ENCODE measurements at regions of chr2 and their contacts with region 1.

Region 1: DNA sequence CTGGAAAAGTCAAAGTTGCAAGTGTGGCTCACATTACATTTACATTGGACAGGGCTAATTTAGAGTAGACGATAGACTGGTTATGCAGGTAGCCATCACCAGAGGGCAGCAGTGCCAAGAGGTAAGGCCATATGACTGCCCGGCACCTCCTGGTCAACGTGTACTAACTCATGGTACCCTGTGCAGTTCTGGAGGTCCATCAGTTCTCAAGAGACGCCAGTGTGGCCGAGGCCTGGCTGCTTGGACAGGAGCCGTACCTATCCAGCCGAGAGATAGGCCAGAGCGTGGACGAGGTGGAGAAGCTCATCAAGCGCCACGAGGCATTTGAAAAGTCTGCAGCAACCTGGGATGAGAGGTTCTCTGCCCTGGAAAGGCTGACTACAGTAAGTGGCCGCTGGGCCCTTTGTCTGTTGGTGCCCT is 65.8 kb upstream of the EML6 start:
- DNase-seq: peak; percentile 61 to 72
- ATAC-seq: peak; percentile 82 to 92 (median 88)
- H3K4me3 ChIP-seq: no peak overlapping the region
- H3K27ac ChIP-seq: no peak overlapping the region
- H3K4me1 ChIP-seq: no peaks in the 10 kb centered on the region
- H3K27me3 ChIP-seq: no peaks in the 10 kb centered on the region
- CTCF ChIP-seq: peak; percentile 60

Region 2: DNA sequence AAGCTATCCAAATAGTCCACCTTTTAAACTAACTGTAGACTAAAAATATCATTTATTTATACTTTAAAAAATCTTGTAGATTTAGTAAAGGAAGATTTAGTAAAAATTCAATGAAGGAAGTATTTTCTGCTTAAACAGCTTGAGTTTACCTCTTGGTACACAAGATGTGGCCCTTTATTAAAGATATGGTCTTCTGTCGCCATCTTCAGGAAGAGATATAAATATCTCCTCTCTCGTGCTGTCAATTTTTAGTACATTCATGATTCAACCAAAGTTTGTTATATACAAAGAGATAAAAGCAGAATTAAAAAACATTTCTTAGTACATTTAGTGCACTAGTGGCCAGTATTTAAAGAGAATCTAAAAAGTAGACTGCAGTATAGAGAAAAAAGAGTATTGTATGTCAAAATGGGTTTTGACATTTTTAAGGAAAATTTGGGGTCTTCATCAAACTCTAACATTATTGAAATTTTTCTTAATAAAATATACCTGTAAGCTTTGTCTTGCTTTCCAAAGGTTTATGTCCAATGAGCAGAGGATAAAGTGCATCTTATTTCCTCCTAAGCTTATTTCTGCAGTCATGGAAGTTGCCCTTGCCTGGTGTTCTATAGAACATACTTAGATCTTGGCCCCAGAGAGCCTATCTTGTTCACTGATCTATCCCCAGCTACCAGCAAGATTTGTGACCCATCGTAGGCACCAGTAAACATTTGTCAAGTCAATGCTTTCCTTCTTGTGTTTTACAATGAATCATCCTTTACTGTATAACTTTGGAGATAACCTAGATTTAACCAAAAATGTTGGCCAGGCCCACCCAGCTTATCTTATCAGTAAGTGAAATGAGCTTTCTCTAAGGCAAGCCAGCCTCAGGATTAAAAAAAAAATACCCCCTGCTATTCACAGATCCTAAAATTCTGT is 47.3 kb after region 1 on chr2:
- intact Hi-C with region 1: loop called (anchors 5 kb)
- DNase-seq: no peak
- ATAC-seq: peak; percentile 44 to 91 (median 74)
- H3K4me3 ChIP-seq: no peak overlapping the region
- H3K27ac ChIP-seq: no peak overlapping the region
- H3K4me1 ChIP-seq: no peaks in the 10 kb centered on the region
- H3K27me3 ChIP-seq: peaks cover 0 to 9% (median 4%) of the 10 kb centered on the region in 3 donors
- CTCF ChIP-seq: peak; percentile 62

Region 3: DNA sequence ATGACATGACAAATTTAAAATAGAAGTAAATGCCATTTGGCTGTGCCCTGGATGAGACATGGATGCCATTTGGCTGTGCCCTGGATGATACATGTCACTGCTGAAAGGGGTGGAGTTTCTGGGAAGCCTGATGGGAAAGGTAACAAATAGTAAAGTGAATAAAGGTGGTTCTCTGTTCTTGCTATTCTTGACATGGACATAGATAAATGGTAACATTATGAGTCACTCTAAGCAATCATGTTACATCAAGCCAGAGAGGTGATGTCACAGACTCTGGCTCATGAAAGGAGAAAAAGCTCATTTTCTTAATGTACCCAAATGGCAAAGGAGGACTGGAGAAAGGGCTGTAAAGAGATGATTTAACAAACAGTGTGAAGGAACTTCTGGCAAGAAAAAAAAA is 152.1 kb after region 1 on chr2:
- intact Hi-C with region 1: no loop called
- DNase-seq: no peak
- ATAC-seq: peak; percentile 61 to 89 (median 74)
- H3K4me3 ChIP-seq: no peak overlapping the region
- H3K27ac ChIP-seq: no peak overlapping the region
- H3K4me1 ChIP-seq: no peaks in the 10 kb centered on the region
- H3K27me3 ChIP-seq: no peaks in the 10 kb centered on the region
- CTCF ChIP-seq: no peak

Region 4: DNA sequence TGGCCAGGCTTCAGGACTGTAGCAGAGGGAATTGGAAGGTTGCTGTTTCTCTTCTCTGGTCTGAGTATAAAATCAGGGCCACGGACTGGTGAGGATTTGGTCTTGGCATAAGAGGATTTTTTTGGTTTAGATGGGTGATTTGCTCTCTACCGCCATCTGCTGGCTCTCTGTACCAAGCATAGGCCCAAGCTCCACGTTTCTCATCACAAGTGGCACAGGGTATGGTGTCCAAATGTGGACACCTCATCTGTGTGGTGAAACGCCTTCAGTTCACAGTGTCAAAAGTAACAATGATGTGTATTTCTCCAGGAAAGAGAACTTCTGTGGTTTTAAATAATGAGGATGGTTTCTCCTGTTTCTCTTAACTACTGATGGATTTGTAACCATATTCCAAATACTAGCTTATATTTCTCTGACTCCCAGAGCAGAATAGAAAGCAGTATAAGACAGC is 180.9 kb after region 1 on chr2:
- intact Hi-C with region 1: loop called (anchors 5 to 10 kb)
- DNase-seq: peak; percentile 67 to 70
- ATAC-seq: peak; percentile 77 to 94 (median 86)
- H3K4me3 ChIP-seq: no peak overlapping the region
- H3K27ac ChIP-seq: no peak overlapping the region
- H3K4me1 ChIP-seq: no peaks in the 10 kb centered on the region
- H3K27me3 ChIP-seq: no peaks in the 10 kb centered on the region
- CTCF ChIP-seq: peak; percentile 93

Region 5: DNA sequence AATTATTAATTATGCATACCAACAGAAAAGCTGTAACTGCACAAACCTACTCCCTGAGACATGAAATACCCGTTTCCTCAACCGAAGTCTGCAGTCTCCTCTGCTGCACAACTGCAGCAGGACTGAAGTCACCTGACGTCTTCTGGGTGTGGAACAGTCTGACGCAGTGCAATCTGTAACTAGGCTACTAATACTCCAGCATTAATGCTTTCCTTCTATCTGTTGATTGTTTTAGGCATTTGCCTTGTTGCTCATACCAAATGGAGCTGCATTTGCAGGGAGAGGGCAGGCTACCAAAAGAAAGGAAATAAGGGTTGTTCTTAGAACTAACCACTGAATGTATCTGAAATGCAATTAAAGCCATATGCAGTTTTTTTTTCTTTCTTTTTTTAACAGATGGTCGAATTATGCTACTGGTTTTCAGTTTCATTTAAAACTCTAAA is 352.5 kb after region 1 on chr2:
- intact Hi-C with region 1: loop called in 1 of 2 experiments (anchors 5 kb)
- DNase-seq: peak; percentile 33 to 70
- ATAC-seq: peak; percentile 85 to 89 (median 88)
- H3K4me3 ChIP-seq: peak overlapping the region; percentile 72
- H3K27ac ChIP-seq: peak overlapping the region; percentile 95
- H3K4me1 ChIP-seq: peaks cover 49% of the 10 kb centered on the region
- H3K27me3 ChIP-seq: no peaks in the 10 kb centered on the region
- CTCF ChIP-seq: no peak

Measured in psoas muscle (tissue), 8 donors.